Tibial artery (tissue), 4 donors: ENCODE measurements at regions of chr21 and their contacts with region 1.

Region 1: DNA sequence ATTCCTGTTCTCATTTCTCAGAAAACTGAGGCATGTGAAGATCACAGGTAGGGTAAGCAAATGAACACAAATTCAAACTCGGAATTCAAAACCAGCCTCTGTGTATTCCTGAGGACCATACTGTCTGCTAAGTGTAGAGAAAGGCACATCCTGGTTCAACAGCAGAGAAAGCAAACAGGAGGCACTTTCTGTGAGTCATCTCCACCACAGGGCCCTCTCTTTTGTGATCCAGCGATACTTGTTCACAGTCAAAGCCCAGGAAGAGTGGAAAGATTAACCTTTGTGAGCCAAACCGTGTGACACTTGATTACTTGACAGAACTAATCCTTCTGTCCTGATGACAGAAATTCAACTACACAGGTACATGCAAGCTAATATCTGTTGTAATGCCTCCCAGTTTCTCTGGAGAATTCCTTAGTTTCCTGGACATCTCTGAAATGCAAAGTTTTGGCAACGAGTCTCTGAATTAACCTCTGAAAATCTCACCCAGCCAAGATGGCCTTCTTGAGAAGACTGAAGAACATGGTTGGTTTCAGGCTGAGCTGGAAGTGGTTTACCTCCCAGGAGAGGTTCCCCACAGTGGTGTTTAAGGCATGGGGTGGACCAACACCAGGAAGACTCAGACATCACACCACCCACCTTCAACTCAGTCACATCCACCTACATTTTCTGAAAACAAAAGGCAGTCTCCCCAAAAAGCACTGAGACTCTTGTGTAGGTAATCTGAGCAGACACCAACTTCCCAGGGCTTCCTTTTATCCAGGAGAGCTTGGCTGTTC is 98.2 kb upstream of the ERG start:
- DNase-seq: no peak
- H3K4me3 ChIP-seq: no peak overlapping the region
- H3K27ac ChIP-seq: peak overlapping the region in 1 of 2 donors; percentile 4
- H3K4me1 ChIP-seq: peaks cover 0 to 58% (median 16%) of the 10 kb centered on the region in 4 donors
- H3K27me3 ChIP-seq: no peaks in the 10 kb centered on the region
- CTCF ChIP-seq: no peak

Region 2: DNA sequence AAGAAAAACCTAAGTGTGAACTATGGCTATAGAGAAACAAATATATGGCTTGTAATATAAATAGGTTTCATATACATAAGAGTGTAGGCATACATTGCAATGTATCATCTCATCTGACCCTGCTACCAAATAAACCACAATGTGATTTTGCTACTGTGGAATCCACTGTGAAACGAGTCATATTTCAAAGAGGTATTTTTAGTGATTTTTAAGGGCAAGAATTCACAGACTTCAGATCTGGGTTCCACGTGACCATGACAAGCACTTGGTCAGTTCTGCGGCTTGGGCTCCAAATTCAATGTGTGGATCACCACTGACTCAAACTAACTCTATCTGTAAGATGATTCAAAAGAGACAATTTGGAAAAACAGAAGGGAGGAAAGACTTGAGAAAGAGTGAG is 48.8 kb after region 1 on chr21:
- intact Hi-C with region 1: loop called (anchors 10 kb)
- DNase-seq: no peak
- H3K4me3 ChIP-seq: no peak overlapping the region
- H3K27ac ChIP-seq: peak overlapping the region; percentile 52 to 65
- H3K4me1 ChIP-seq: peaks cover 0 to 71% (median 30%) of the 10 kb centered on the region in 4 donors
- H3K27me3 ChIP-seq: no peaks in the 10 kb centered on the region
- CTCF ChIP-seq: no peak